Common myeloid progenitor, CD34-positive (primary cell): ENCODE measurements at regions of chr3 and their contacts with region 1.

Region 1: GRCh38 chr3:56997675-56998074 is 62.8 kb upstream of the SPATA12 start:
- DNase-seq: no peak
- H3K4me3 ChIP-seq: peak overlapping the region in 1 of 7 experiments; percentile 4
- H3K27ac ChIP-seq: no peak overlapping the region
- H3K4me1 ChIP-seq: no peaks in the 10 kb centered on the region
- H3K27me3 ChIP-seq: no peaks in the 10 kb centered on the region

Region 2: DNA sequence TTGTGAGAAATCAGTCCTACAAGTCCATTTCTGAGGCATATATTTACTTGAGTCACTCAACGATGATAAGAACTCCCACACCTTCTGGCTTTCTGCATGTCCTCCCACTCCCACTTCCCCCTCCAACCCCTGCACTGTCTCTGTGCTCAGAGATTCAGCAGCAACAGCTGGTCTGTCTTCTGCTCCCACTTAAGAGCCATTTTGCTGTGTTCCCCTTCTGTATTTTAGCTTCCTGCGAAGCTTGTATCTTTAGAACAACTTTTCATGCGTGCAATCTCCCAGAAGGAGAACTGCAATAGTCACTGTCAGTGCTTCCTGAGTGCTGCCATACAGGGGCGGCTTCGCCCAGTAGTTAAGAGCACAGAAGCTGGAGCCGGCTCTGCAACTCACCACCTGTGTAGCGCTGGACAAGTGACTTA is 27.2 kb before region 1 on chr3:
- CTCF ChIA-PET with region 1: no interaction called
- POLR2A ChIA-PET with region 1: no interaction called
- DNase-seq: peak in 2 of 3 donors; percentile 46 to 51
- H3K4me3 ChIP-seq: peak overlapping the region in 1 of 7 experiments; percentile 13
- H3K27ac ChIP-seq: no peak overlapping the region
- H3K4me1 ChIP-seq: peaks cover 2 to 17% (median 5%) of the 10 kb centered on the region in 4 experiments
- H3K27me3 ChIP-seq: no peaks in the 10 kb centered on the region

Region 3: DNA sequence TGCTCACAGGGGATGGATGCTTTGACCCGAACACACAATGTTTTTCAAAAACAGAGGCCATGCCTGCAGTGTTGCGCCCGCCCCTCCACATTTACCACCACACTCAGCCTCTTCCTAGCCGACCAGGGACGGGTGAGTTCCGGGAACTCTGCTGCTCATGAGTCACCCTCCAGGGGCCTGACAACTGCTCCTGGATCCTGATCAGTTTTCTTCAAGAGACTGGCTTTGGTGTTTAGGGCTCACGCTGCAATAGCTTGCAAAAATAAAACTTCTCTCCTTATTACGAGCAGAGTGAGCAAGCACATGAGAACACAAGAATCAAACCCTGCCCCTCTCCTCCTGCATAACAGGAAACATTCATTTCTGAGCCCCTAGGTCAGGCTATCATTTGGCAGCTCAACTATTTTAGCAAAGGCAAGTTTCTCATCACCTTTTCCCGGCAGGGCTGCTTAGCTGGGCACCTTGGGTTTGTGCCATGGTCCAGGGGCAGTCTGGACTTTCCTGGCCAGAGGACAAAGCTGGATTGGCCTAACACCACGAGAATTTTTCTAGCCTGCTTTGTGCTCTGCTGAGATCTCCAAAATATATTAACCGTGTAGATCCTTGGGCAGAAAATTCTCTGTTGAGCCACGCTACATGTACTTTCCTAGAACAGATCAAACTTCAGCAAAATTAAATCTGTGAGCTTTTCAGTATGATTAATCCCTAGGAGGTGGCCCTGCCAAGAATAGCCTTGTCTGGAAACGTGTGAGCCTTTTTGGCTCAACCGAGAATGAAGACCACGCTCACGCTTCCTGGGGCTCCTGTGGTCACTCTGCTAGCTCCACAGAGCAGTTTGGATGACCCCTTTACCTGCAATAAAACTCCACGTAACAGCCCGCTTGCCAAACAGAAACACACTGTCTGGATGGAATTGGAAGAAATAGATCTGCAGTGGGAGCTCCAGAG is 10.1 kb after region 1 on chr3:
- CTCF ChIA-PET with region 1: interaction called, 33 read pairs
- POLR2A ChIA-PET with region 1: no interaction called
- DNase-seq: peak in 2 of 3 donors; percentile 64 to 71
- H3K4me3 ChIP-seq: peak overlapping the region in 1 of 7 experiments; percentile 2
- H3K27ac ChIP-seq: peak overlapping the region in 1 of 2 experiments; percentile 64
- H3K4me1 ChIP-seq: peaks cover 0 to 22% (median 19%) of the 10 kb centered on the region in 4 experiments
- H3K27me3 ChIP-seq: no peaks in the 10 kb centered on the region

Region 4: DNA sequence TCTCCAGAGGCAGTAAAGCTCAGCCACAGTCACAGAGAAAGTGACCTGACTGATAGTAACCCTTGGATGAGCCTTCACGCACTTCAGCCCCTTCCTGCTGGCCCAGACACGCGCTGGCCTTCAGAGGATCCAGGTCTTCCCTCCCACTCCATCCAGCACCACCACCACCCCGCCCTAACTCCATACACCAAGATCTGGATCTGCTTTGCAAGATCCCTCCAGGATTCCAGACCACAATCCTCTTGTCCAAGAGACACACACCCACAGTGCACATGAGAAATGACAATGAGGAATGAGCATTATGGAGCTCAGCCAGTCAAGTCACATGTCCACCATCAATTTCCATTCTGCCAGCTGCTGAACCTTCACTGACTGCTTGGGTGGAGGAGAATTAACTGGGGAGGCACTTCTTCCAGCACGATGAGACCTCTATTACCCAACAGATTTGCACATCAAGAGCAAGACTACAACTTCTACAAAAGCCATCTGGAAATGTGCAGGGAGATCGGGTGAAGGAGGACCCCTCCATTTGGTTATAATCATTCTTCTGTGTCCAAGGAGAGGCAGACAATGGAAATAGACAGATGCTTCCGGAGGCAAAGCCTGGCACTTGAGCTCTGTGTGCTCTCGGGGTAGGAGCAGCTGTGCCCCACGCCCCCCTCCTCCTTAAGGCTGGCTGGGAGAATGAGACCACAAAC is 50.4 kb after region 1 on chr3:
- CTCF ChIA-PET with region 1: interaction called, 22 read pairs
- POLR2A ChIA-PET with region 1: no interaction called
- DNase-seq: peak; percentile 40 to 94 (median 88)
- H3K4me3 ChIP-seq: peak overlapping the region in 1 of 7 experiments; percentile 6
- H3K27ac ChIP-seq: no peak overlapping the region
- H3K4me1 ChIP-seq: peaks cover 0 to 24% (median 10%) of the 10 kb centered on the region in 4 experiments
- H3K27me3 ChIP-seq: no peaks in the 10 kb centered on the region

Region 5: DNA sequence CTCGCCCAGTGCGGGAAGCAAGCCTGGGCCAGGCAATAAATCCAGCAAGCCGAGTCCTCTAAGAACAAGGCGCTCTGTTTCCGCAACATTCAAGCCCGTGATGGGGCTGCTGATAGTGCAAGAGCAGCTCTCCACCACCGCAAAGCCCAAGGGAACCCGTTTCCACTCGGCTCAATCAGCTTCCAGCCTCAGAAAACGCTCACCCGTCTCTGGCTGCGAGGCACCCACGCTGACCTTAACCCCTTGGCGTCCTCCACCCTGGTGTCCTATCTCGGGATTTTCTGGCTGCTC is 80.6 kb after region 1 on chr3:
- CTCF ChIA-PET with region 1: interaction called, 14 read pairs
- POLR2A ChIA-PET with region 1: no interaction called
- DNase-seq: peak; percentile 64 to 92 (median 88)
- H3K4me3 ChIP-seq: peak overlapping the region; percentile 56 to 88 (median 74)
- H3K27ac ChIP-seq: no peak overlapping the region
- H3K4me1 ChIP-seq: peaks cover 0 to 35% (median 16%) of the 10 kb centered on the region in 4 experiments
- H3K27me3 ChIP-seq: peaks cover 0 to 4% (median 0%) of the 10 kb centered on the region in 5 experiments

Region 6: DNA sequence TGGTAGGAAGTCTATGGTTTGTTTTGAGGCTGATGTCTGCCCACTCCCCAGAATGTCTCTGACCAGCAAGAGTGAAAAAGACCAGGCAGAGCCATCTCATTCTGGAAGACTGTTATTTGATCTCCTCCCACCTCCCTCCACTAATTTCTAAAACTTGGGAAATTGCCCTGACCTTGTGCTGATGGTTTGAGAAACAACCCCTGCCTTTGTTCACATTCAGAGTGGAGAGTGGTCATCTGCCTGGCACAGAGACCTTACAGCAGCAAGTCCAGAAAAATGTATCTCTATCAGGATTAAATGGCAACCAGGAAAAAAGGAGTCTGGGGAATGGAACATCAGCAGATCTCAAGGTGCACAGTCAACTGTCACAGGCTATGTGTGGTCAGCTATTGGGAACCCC is 88.5 kb after region 1 on chr3:
- CTCF ChIA-PET with region 1: interaction called, 11 read pairs
- POLR2A ChIA-PET with region 1: no interaction called
- DNase-seq: no peak
- H3K4me3 ChIP-seq: no peak overlapping the region
- H3K27ac ChIP-seq: no peak overlapping the region
- H3K4me1 ChIP-seq: peaks cover 0 to under 1% (median 0%) of the 10 kb centered on the region in 4 experiments
- H3K27me3 ChIP-seq: no peaks in the 10 kb centered on the region

Region 7: GRCh38 chr3:57094575-57094974 is 96.9 kb after region 1 on chr3:
- CTCF ChIA-PET with region 1: interaction called, 17 read pairs
- POLR2A ChIA-PET with region 1: no interaction called
- DNase-seq: no peak
- H3K4me3 ChIP-seq: no peak overlapping the region
- H3K27ac ChIP-seq: no peak overlapping the region
- H3K4me1 ChIP-seq: peaks cover 0 to 4% (median 0%) of the 10 kb centered on the region in 4 experiments
- H3K27me3 ChIP-seq: no peaks in the 10 kb centered on the region